Astrocyte of the cerebellum (primary cell): ENCODE measurements at regions of chr10 and their contacts with region 1.

Region 1: GRCh38 chr10:47299611-47300428 is at the start of gene GDF10:
- DNase-seq: no peak
- H3K4me3 ChIP-seq: peak within 1 kb of the TSS; percentile 43
- CTCF ChIP-seq: no peak

Region 2: GRCh38 chr10:47024399-47025252 is 275.2 kb before region 1 on chr10:
- in situ Hi-C with region 1: loop called (anchors 25 kb)
- DNase-seq: peak; percentile 39
- H3K4me3 ChIP-seq: no peak overlapping the region
- CTCF ChIP-seq: peak; percentile 91